Endothelial cell of umbilical vein (primary cell): ENCODE measurements at regions of chr5 and their contacts with region 1.

Region 1: GRCh38 chr5:14727428-14727865 is 62.9 kb downstream of the OTULIN start:
- DNase-seq: peak; percentile 81
- H3K4me3 ChIP-seq: no peak overlapping the region
- H3K27ac ChIP-seq: no peak overlapping the region
- H3K4me1 ChIP-seq: no peaks in the 10 kb centered on the region
- H3K27me3 ChIP-seq: no peaks in the 10 kb centered on the region
- CTCF ChIP-seq: peak; percentile 88
- POLR2A ChIP-seq: no peak

Region 2: GRCh38 chr5:14685757-14686156 is 41.7 kb before region 1 on chr5:
- CTCF ChIA-PET with region 1: interaction called, 9 read pairs
- POLR2A ChIA-PET with region 1: no interaction called
- dilution Hi-C with region 1: no loop called
- intact Hi-C with region 1: loop called (anchors 1 kb)
- DNase-seq: peak; percentile 59
- H3K4me3 ChIP-seq: no peak overlapping the region
- H3K27ac ChIP-seq: no peak overlapping the region
- H3K4me1 ChIP-seq: no peaks in the 10 kb centered on the region
- H3K27me3 ChIP-seq: no peaks in the 10 kb centered on the region
- CTCF ChIP-seq: peak; percentile 53 to 56
- POLR2A ChIP-seq: no peak

Region 3: GRCh38 chr5:14809369-14810155 is 82.1 kb after region 1 on chr5:
- CTCF ChIA-PET with region 1: interaction called, 3 read pairs
- POLR2A ChIA-PET with region 1: no interaction called
- dilution Hi-C with region 1: no loop called
- intact Hi-C with region 1: loop called (anchors 2 kb)
- DNase-seq: peak; percentile 75
- H3K4me3 ChIP-seq: no peak overlapping the region
- H3K27ac ChIP-seq: peak overlapping the region; percentile 50
- H3K4me1 ChIP-seq: peaks cover 20% of the 10 kb centered on the region
- H3K27me3 ChIP-seq: no peaks in the 10 kb centered on the region
- CTCF ChIP-seq: no peak
- POLR2A ChIP-seq: no peak

Region 4: GRCh38 chr5:14879937-14880589 is 152.6 kb after region 1 on chr5:
- CTCF ChIA-PET with region 1: interaction called, 12 read pairs
- POLR2A ChIA-PET with region 1: no interaction called
- dilution Hi-C with region 1: no loop called
- intact Hi-C with region 1: no loop called
- DNase-seq: no peak
- H3K4me3 ChIP-seq: no peak overlapping the region
- H3K27ac ChIP-seq: no peak overlapping the region
- H3K4me1 ChIP-seq: no peaks in the 10 kb centered on the region
- H3K27me3 ChIP-seq: peaks cover 7 to 22% of the 10 kb centered on the region in 2 experiments
- CTCF ChIP-seq: no peak
- POLR2A ChIP-seq: no peak

Region 5: GRCh38 chr5:15003511-15003920 is 276.1 kb after region 1 on chr5:
- CTCF ChIA-PET with region 1: interaction called, 168 read pairs
- POLR2A ChIA-PET with region 1: no interaction called
- dilution Hi-C with region 1: loop called (anchors 25 kb)
- intact Hi-C with region 1: loop called (anchors 1 kb)
- DNase-seq: peak; percentile 82
- H3K4me3 ChIP-seq: no peak overlapping the region
- H3K27ac ChIP-seq: no peak overlapping the region
- H3K4me1 ChIP-seq: peaks cover 8% of the 10 kb centered on the region
- H3K27me3 ChIP-seq: peaks cover 21 to 39% of the 10 kb centered on the region in 2 experiments
- CTCF ChIP-seq: peak; percentile 70 to 81
- POLR2A ChIP-seq: no peak